CD4-positive, alpha-beta T cell (primary cell): ENCODE measurements at regions of chr10 and their contacts with region 1.

Region 1: DNA sequence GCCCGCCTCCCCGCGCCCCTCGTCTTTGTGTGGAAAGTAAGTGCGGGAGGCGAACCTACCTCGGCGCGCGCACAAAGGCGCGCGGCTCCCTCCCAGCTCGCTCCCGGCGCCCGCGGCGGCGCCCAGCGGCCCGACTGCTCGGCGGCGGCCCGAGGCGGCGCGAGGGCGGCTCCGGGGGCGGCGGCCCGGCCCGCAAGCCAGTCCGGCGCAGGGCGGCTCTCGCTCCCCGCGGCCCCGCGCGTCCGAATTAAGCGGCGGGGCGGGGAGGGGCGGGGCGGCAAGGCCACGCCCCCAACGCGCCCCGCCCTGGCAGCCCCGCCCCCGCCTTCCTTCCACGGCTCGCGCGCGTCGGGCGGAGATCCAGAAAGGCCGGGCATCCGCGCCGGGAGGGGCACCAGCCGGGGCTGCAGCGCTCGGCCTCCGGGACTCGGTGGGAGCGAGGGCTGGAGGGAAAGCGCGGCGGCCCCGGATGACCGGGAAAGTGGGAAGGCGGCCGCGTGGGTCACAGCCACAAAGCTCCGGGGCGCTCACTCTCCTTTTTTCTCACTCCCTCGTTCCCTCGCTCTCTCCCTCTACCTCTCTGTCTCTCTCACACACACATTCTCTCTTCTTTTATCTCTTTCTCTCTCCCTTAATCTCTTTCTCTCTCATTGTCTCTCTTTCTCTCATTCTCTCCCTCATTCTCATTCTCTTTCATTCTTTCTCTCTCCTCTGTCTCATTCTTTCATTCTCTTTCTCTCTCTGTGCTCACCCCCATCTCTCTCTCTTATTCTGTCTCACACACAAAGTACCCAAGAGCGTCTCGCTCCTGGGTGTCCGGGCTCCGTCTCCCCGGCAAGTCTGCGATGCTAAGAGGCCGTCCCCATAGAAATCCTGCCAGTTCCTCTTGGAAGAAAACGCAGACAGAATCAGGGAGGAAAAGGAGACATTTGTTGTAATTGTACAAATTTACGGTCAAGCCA is 170.2 kb downstream of the FAM107B start:
- DNase-seq: peak; percentile 48 to 89 (median 70)
- ATAC-seq: peak; percentile 56
- H3K4me3 ChIP-seq: peak overlapping the region; percentile 65
- H3K4me3 Mint-ChIP-seq: peak overlapping the region; percentile 90
- H3K27ac ChIP-seq: peak overlapping the region in 1 of 2 donors; percentile 26
- H3K27ac Mint-ChIP-seq: peak overlapping the region; percentile 90
- H3K4me1 ChIP-seq: peaks cover 48% of the 10 kb centered on the region
- H3K4me1 Mint-ChIP-seq: peaks cover 57% of the 10 kb centered on the region
- H3K27me3 ChIP-seq: no peaks in the 10 kb centered on the region
- H3K27me3 Mint-ChIP-seq: no peaks in the 10 kb centered on the region
- CTCF ChIP-seq: no peak

Region 2: GRCh38 chr10:14499601-14499904 is 104.9 kb before region 1 on chr10:
- CTCF ChIA-PET with region 1: no interaction called
- POLR2A ChIA-PET with region 1: no interaction called
- intact Hi-C with region 1: loop called in 1 of 2 experiments (anchors 5 kb)
- DNase-seq: no peak
- ATAC-seq: no peak
- H3K4me3 ChIP-seq: no peak overlapping the region
- H3K4me3 Mint-ChIP-seq: no peak overlapping the region
- H3K27ac ChIP-seq: no peak overlapping the region
- H3K27ac Mint-ChIP-seq: no peak overlapping the region
- H3K4me1 ChIP-seq: peaks cover 9% of the 10 kb centered on the region
- H3K4me1 Mint-ChIP-seq: peaks cover 4% of the 10 kb centered on the region
- H3K27me3 ChIP-seq: no peaks in the 10 kb centered on the region
- H3K27me3 Mint-ChIP-seq: no peaks in the 10 kb centered on the region
- CTCF ChIP-seq: no peak

Region 3: GRCh38 chr10:14564268-14564744 is 40.2 kb before region 1 on chr10:
- CTCF ChIA-PET with region 1: interaction called, 4 read pairs
- POLR2A ChIA-PET with region 1: interaction called, 5 read pairs
- intact Hi-C with region 1: loop called (anchors 2 to 5 kb)
- DNase-seq: peak in 4 of 14 experiments; percentile 56 to 85 (median 78)
- ATAC-seq: peak; percentile 57
- H3K4me3 ChIP-seq: peak overlapping the region; percentile 32
- H3K4me3 Mint-ChIP-seq: peak overlapping the region; percentile 87
- H3K27ac ChIP-seq: peak overlapping the region; percentile 80 to 82
- H3K27ac Mint-ChIP-seq: peak overlapping the region; percentile 98
- H3K4me1 ChIP-seq: peaks cover 83% of the 10 kb centered on the region
- H3K4me1 Mint-ChIP-seq: peaks cover 97% of the 10 kb centered on the region
- H3K27me3 ChIP-seq: no peaks in the 10 kb centered on the region
- H3K27me3 Mint-ChIP-seq: no peaks in the 10 kb centered on the region
- CTCF ChIP-seq: no peak

Region 4: DNA sequence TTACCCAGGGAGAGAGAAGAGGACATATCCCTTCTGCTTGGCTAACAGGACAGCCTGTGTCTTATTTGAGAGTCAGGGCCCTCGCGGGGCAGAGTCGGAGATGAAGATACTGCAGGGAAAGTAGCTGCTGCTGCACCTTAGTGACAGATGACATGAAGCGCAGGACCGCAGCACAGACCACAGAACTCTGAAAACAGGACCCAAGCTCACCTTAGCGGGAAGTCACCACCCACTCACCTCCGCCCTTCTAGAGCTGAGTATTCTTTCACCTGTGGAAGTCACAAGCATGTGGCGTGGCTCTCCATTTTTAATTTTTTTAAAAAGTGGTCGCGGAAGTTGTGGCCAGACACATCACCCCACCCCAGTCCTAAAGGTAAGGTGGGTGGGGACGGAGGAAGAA is 21.2 kb before region 1 on chr10:
- CTCF ChIA-PET with region 1: interaction called, 9 read pairs
- POLR2A ChIA-PET with region 1: interaction called, 14 read pairs
- intact Hi-C with region 1: loop called (anchors 1 to 2 kb)
- DNase-seq: peak; percentile 70 to 95 (median 78)
- ATAC-seq: peak; percentile 77
- H3K4me3 ChIP-seq: no peak overlapping the region
- H3K4me3 Mint-ChIP-seq: peak overlapping the region; percentile 78
- H3K27ac ChIP-seq: peak overlapping the region; percentile 90 to 95
- H3K27ac Mint-ChIP-seq: peak overlapping the region; percentile 97
- H3K4me1 ChIP-seq: peaks cover 93% of the 10 kb centered on the region
- H3K4me1 Mint-ChIP-seq: peaks cover 98% of the 10 kb centered on the region
- H3K27me3 ChIP-seq: no peaks in the 10 kb centered on the region
- H3K27me3 Mint-ChIP-seq: no peaks in the 10 kb centered on the region
- CTCF ChIP-seq: no peak

Region 5: GRCh38 chr10:14648005-14648765 is 43.7 kb after region 1 on chr10:
- CTCF ChIA-PET with region 1: no interaction called
- POLR2A ChIA-PET with region 1: interaction called, 7 read pairs
- intact Hi-C with region 1: loop called (anchors 1 to 2 kb)
- DNase-seq: peak; percentile 44 to 92 (median 65)
- ATAC-seq: peak; percentile 85
- H3K4me3 ChIP-seq: peak overlapping the region; percentile 55
- H3K4me3 Mint-ChIP-seq: peak overlapping the region; percentile 84
- H3K27ac ChIP-seq: peak overlapping the region; percentile 91 to 95
- H3K27ac Mint-ChIP-seq: peak overlapping the region; percentile 99
- H3K4me1 ChIP-seq: peaks cover 43% of the 10 kb centered on the region
- H3K4me1 Mint-ChIP-seq: peaks cover 69% of the 10 kb centered on the region
- H3K27me3 ChIP-seq: no peaks in the 10 kb centered on the region
- H3K27me3 Mint-ChIP-seq: no peaks in the 10 kb centered on the region
- CTCF ChIP-seq: no peak

Region 6: GRCh38 chr10:14822879-14823755 is 218.7 kb after region 1 on chr10:
- CTCF ChIA-PET with region 1: no interaction called
- POLR2A ChIA-PET with region 1: no interaction called
- intact Hi-C with region 1: loop called (anchors 5 kb)
- DNase-seq: peak in 13 of 14 experiments; percentile 15 to 67 (median 37)
- ATAC-seq: peak; percentile 56
- H3K4me3 ChIP-seq: no peak overlapping the region
- H3K4me3 Mint-ChIP-seq: no peak overlapping the region
- H3K27ac ChIP-seq: no peak overlapping the region
- H3K27ac Mint-ChIP-seq: no peak overlapping the region
- H3K4me1 ChIP-seq: no peaks in the 10 kb centered on the region
- H3K4me1 Mint-ChIP-seq: peaks cover 4% of the 10 kb centered on the region
- H3K27me3 ChIP-seq: no peaks in the 10 kb centered on the region
- H3K27me3 Mint-ChIP-seq: no peaks in the 10 kb centered on the region
- CTCF ChIP-seq: peak; percentile 76